ENCODE measurements at regions of chr3 and their contacts with region 1.

Region 1: DNA sequence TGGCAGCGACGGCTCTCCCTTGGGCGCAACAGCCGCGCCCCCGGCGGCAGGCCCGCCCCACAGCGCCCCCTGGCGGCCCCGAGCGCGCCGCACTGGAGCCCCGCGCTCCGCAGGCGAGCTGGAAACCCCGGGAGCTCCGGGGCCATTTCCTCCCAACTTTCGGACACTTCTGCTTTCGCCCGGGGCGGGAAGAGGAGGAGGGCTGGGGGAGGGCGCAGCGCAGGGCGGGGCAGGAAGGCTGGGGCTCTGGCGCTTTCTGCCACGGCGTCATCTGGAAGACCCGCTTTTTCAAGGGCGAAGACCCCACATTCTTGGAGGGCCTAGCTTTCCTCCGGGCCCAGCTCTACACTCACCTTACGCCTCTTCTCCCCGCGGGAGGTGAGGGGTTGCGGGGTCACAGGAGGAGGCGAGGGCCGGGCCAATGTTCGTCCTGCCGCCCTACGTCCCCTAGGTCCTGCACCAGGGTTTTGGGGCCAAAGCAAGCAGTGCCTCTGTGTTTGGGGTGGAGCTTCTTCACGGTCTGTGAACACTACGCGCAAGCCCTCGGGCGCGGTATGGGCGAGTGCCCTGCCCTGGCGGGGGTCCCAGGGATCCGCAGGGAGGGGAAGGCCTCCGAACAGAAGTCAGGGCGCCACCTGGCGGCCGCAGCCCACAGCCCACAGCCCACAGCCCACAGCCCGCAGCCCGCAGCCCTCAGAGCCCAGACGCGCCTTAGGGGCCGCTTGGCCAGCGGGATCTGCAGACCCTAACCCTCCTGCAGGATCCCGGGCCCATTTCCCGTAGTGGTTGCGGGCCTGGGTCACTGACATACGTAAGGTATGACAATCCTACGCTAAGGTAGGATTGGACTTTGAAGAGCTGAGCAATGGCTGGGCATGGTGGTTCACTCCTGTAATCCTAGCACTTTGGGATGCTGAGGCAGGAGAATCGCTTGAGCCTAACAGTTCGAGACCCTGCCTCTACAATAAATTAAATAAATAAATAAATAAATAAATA is 31.1 kb downstream of the FOXL2 start:
- DNase-seq: peak in 1 of 2 experiments; percentile 98
- H3K4me3 ChIP-seq: peak overlapping the region; percentile 44 to 89 (median 86)
- H3K27ac ChIP-seq: peak overlapping the region; percentile 65
- H3K4me1 ChIP-seq: peaks cover 0 to 4% (median under 1%) of the 10 kb centered on the region in 4 experiments; a peak in 2 of 7 replicates
- H3K27me3 ChIP-seq: no peaks in the 10 kb centered on the region
- CTCF ChIP-seq: peak; percentile 77 to 97 (median 80)
- EP300 ChIP-seq: peak in 1 of 2 experiments; percentile 50; a peak in 1 of 3 replicates
- POLR2A ChIP-seq: peak in 1 of 2 experiments; percentile 57; a peak in 1 of 3 replicates
- RAD21 ChIP-seq: peak; percentile 75 to 85

Region 2: GRCh38 chr3:138594150-138594934 is 321.5 kb before region 1 on chr3 and contains the start of gene CEP70:
- CTCF ChIA-PET with region 1: interaction called, 80 read pairs
- POLR2A ChIA-PET with region 1: interaction called, 5 read pairs
- DNase-seq: peak; percentile 85 to 96
- H3K4me3 ChIP-seq: peak within 1 kb of the TSS; percentile 70 to 82 (median 78)
- H3K27ac ChIP-seq: peak within 1 kb of the TSS; percentile 54; the same call in 1 of the 2 replicates
- H3K4me1 ChIP-seq: peaks cover 0 to 5% (median 3%) of the 10 kb centered on the region in 4 experiments; a peak in 3 of 7 replicates
- H3K27me3 ChIP-seq: no peaks in the 10 kb centered on the region
- CTCF ChIP-seq: peak; percentile 39 to 92 (median 65)
- EP300 ChIP-seq: no peak
- POLR2A ChIP-seq: peak; percentile 54 to 84
- RAD21 ChIP-seq: peak; percentile 84 to 87
- total RNA-seq, gene CEP70: 23.6 and 26.2 TPM in 2 replicates

Region 3: GRCh38 chr3:138686771-138687221 is 229.0 kb before region 1 on chr3:
- CTCF ChIA-PET with region 1: interaction called, 322 read pairs
- POLR2A ChIA-PET with region 1: no interaction called
- DNase-seq: no peak
- H3K4me3 ChIP-seq: no peak overlapping the region
- H3K27ac ChIP-seq: no peak overlapping the region
- H3K4me1 ChIP-seq: no peaks in the 10 kb centered on the region
- H3K27me3 ChIP-seq: no peaks in the 10 kb centered on the region
- CTCF ChIP-seq: no peak
- EP300 ChIP-seq: no peak
- POLR2A ChIP-seq: no peak
- RAD21 ChIP-seq: no peak

Region 4: GRCh38 chr3:138726946-138727730 is 188.7 kb before region 1 on chr3:
- CTCF ChIA-PET with region 1: interaction called, 10 read pairs
- POLR2A ChIA-PET with region 1: no interaction called
- DNase-seq: no peak
- H3K4me3 ChIP-seq: no peak overlapping the region
- H3K27ac ChIP-seq: no peak overlapping the region
- H3K4me1 ChIP-seq: no peaks in the 10 kb centered on the region; a peak in 1 of 7 replicates
- H3K27me3 ChIP-seq: no peaks in the 10 kb centered on the region
- CTCF ChIP-seq: no peak
- EP300 ChIP-seq: no peak
- POLR2A ChIP-seq: no peak
- RAD21 ChIP-seq: no peak

Region 5: DNA sequence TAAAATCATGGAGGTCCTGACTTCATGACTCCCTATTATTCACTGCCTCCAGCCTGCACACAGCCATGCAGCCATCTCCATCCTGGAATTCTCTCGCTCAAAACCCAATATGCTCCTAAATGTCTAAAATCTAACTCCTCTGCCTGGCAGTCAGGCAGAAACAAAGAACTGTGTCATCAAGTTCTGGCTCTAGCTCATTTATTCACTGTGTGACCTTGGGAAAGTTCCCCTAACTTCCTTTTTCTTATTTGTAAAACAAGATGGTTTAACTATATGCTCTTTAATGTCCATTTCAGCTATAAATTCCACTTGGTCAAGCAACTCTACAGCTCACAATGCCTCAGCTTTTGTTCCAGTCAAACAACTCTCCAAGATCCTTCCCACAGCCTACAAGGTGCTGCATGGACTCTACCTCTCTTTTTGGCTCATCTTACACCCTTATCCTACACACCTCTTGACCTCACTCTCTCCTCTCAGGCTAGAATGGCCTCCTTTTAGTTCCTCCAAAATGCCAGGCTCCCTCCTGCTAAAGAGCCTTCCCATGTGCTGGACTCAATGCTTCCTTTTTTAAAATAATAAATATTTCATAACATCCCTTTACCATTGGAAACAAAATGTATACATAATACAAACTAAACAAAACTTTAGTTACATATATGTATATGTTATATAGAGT is 97.5 kb before region 1 on chr3:
- CTCF ChIA-PET with region 1: interaction called, 11 read pairs
- POLR2A ChIA-PET with region 1: interaction called, 4 read pairs
- DNase-seq: no peak
- H3K4me3 ChIP-seq: no peak overlapping the region
- H3K27ac ChIP-seq: no peak overlapping the region
- H3K4me1 ChIP-seq: no peaks in the 10 kb centered on the region
- H3K27me3 ChIP-seq: no peaks in the 10 kb centered on the region
- CTCF ChIP-seq: no peak
- EP300 ChIP-seq: no peak
- POLR2A ChIP-seq: no peak
- RAD21 ChIP-seq: no peak

Region 6: GRCh38 chr3:138850151-138850550 is 65.7 kb before region 1 on chr3:
- CTCF ChIA-PET with region 1: interaction called, 18 read pairs
- POLR2A ChIA-PET with region 1: interaction called, 12 read pairs
- DNase-seq: no peak
- H3K4me3 ChIP-seq: no peak overlapping the region
- H3K27ac ChIP-seq: no peak overlapping the region
- H3K4me1 ChIP-seq: peaks cover 7 to 15% (median 11%) of the 10 kb centered on the region in 4 experiments; a peak in 6 of 7 replicates
- H3K27me3 ChIP-seq: no peaks in the 10 kb centered on the region
- CTCF ChIP-seq: no peak
- EP300 ChIP-seq: no peak
- POLR2A ChIP-seq: no peak
- RAD21 ChIP-seq: no peak

Region 7: DNA sequence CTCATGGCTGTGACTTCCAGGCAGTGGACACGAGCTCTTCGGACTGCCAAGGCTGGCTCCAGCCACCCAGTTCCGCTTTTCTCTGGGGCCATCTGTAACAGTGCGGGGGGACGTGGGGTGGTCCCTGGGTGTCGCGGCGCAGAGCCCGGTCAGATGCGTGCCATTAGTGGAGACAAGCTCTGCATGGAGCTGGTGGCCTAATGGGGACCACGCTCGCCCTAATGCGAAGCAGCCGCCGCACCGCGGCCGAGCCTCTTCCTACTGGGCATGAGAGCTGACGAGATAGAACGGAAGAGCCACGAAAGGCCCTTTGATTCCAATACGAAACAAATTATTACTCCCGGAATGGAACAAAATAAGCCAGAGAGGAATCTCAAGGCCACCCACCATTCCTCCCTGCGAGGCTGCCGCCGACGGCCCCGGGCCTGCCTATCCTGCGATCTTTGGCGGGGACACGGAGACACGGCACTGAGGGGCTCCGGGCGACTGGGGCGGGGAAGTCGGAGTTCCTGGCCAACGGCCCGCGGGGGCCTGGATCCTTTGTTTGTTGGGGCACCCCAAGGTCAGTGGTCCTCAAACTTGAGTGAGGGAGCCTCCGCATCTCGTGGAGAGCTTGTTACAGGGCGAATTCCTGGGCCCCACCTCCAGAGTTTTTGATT is 13.1 kb after region 1 on chr3:
- CTCF ChIA-PET with region 1: interaction called, 180 read pairs
- POLR2A ChIA-PET with region 1: interaction called, 4 read pairs
- DNase-seq: no peak
- H3K4me3 ChIP-seq: no peak overlapping the region
- H3K27ac ChIP-seq: no peak overlapping the region
- H3K4me1 ChIP-seq: peaks cover 0 to 6% (median 4%) of the 10 kb centered on the region in 4 experiments; a peak in 4 of 7 replicates
- H3K27me3 ChIP-seq: no peaks in the 10 kb centered on the region
- CTCF ChIP-seq: no peak
- EP300 ChIP-seq: no peak
- POLR2A ChIP-seq: no peak
- RAD21 ChIP-seq: no peak

Region 8: GRCh38 chr3:139128803-139129202 is 213.0 kb after region 1 on chr3:
- CTCF ChIA-PET with region 1: no interaction called
- POLR2A ChIA-PET with region 1: no interaction called
- DNase-seq: no peak
- H3K4me3 ChIP-seq: no peak overlapping the region
- H3K27ac ChIP-seq: no peak overlapping the region
- H3K4me1 ChIP-seq: peaks cover 0 to 4% (median 0%) of the 10 kb centered on the region in 4 experiments; a peak in 2 of 7 replicates
- H3K27me3 ChIP-seq: no peaks in the 10 kb centered on the region; a peak in 1 of 7 replicates
- CTCF ChIP-seq: no peak
- EP300 ChIP-seq: no peak
- POLR2A ChIP-seq: no peak
- RAD21 ChIP-seq: no peak

Measured in H1 (cell line).